Activated naive CD4-positive, alpha-beta T cell treated with anti-CD3 and anti-CD28 coated beads for 36 hours (primary cell): ENCODE measurements at regions of chr7 and their contacts with region 1.

Region 1: GRCh38 chr7:149028346-149029109 is at the start of gene PDIA4:
- DNase-seq: peak; percentile 100
- H3K4me3 Mint-ChIP-seq: peak within 1 kb of the TSS; percentile 95
- H3K27ac Mint-ChIP-seq: peak within 1 kb of the TSS; percentile 89
- H3K4me1 Mint-ChIP-seq: peaks cover 37% of the 10 kb centered on the region
- H3K27me3 Mint-ChIP-seq: no peaks in the 10 kb centered on the region
- total RNA-seq, gene PDIA4: 80.2 to 82.8 TPM

Region 2: GRCh38 chr7:148598351-148598750 is 430.2 kb before region 1 on chr7:
- CTCF ChIA-PET with region 1: no interaction called
- intact Hi-C with region 1: no loop called
- DNase-seq: no peak
- H3K4me3 Mint-ChIP-seq: no peak overlapping the region
- H3K27ac Mint-ChIP-seq: no peak overlapping the region
- H3K4me1 Mint-ChIP-seq: no peaks in the 10 kb centered on the region
- H3K27me3 Mint-ChIP-seq: no peaks in the 10 kb centered on the region

Region 3: DNA sequence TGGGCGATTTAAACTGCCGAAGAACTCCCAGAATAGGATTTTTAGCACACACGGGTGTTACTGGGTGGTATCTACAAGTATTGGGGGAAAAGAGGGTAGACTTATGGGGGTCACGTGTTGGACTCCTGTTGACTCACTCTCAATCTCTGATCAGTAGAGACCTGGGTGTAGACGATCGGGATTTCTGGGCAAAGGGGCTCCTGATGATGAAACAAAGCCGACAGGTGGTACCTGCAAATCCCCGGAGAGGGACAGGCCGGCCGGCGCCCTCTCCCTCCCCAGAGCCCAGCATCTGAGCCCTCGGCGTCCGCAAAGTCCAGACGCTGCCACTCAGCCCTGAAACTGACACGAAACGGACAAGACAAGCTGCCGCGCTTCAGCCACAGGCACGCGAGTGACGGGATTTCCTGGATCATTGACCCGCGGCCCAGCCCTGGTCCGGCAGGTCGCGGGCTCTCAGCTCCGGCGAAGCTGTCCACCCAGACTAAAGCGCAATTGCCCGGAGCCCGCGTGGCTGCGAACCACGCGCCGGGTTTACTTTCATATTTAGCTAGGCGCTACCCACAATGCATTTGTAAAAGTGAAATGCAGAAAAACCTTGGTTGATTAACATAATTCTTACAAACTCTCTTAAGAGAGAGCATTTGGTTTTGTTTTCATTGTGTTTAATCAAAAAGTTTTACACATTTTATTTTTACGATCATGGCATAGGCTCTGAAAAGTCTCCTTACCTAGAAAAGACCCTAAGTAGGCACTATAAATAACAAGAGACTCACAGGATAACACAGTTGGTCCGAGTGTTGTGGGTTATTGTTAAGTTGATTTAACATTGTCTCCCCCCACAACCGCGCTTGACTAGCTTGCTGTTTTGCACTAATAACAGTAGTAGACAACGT is 87.6 kb before region 1 on chr7:
- CTCF ChIA-PET with region 1: no interaction called
- intact Hi-C with region 1: loop called (anchors 1 kb)
- DNase-seq: peak; percentile 68
- H3K4me3 Mint-ChIP-seq: peak overlapping the region; percentile 94
- H3K27ac Mint-ChIP-seq: peak overlapping the region; percentile 98
- H3K4me1 Mint-ChIP-seq: peaks cover 15% of the 10 kb centered on the region
- H3K27me3 Mint-ChIP-seq: no peaks in the 10 kb centered on the region

Region 4: DNA sequence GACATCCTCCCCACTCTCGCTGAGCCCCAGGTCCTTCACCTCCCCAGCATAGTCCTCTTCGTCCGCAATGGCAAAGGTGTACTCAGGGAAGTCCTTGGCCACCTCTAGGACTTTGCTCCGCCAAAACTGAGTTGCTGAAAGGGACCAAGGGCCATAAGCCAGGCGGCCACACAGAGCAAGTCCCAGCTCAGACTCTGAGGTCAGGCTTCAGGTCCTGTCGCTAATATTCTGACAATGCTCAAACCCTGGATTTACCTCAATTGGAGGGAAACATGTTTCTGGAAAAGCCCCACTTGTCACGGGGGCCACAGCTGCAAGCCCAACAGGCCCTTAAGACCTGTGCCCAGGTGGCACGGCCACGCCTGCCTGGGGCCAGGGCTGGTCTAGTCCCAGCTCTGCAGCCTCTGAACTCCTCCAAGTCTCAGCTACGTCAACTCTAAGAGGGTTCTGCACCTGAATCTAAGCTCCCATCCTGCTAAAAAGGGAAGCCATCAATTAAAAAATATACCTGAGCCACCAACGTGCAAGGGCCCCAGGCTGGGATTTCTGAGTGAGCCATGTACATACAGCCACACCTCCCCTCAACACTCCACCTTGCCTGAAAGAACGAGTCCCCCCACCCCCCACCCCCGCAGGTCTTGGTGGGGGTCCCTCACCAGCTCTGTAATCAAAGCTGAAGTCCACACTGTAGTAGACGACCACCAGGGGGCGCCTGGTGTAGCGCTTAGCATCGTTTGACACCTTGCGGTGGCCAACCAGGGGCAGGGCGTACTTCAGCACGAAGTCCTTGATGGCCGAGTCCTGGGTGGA is 23.1 kb before region 1 on chr7:
- CTCF ChIA-PET with region 1: interaction called, 59 read pairs
- intact Hi-C with region 1: loop called (anchors 1 kb)
- DNase-seq: peak; percentile 88
- H3K4me3 Mint-ChIP-seq: no peak overlapping the region
- H3K27ac Mint-ChIP-seq: no peak overlapping the region
- H3K4me1 Mint-ChIP-seq: peaks cover 3% of the 10 kb centered on the region
- H3K27me3 Mint-ChIP-seq: no peaks in the 10 kb centered on the region

Region 5: GRCh38 chr7:149147072-149147751 is 118.7 kb after region 1 on chr7 and contains the start of gene ZNF398:
- CTCF ChIA-PET with region 1: no interaction called
- intact Hi-C with region 1: loop called (anchors 1 kb)
- DNase-seq: peak; percentile 73
- H3K4me3 Mint-ChIP-seq: peak within 1 kb of the TSS; percentile 87
- H3K27ac Mint-ChIP-seq: peak within 1 kb of the TSS; percentile 91
- H3K4me1 Mint-ChIP-seq: peaks cover 33% of the 10 kb centered on the region
- H3K27me3 Mint-ChIP-seq: no peaks in the 10 kb centered on the region
- total RNA-seq, gene ZNF398: 4.3 to 5.0 TPM

Region 6: GRCh38 chr7:149245244-149245643 is 216.7 kb after region 1 on chr7:
- CTCF ChIA-PET with region 1: no interaction called
- intact Hi-C with region 1: loop called (anchors 2 kb)
- DNase-seq: peak; percentile 75
- H3K4me3 Mint-ChIP-seq: no peak overlapping the region
- H3K27ac Mint-ChIP-seq: peak overlapping the region; percentile 91
- H3K4me1 Mint-ChIP-seq: peaks cover 75% of the 10 kb centered on the region
- H3K27me3 Mint-ChIP-seq: no peaks in the 10 kb centered on the region

Region 7: GRCh38 chr7:149284850-149285626 is 256.5 kb after region 1 on chr7:
- CTCF ChIA-PET with region 1: no interaction called
- intact Hi-C with region 1: loop called (anchors 2 kb)
- DNase-seq: peak; percentile 99
- H3K4me3 Mint-ChIP-seq: peak overlapping the region; percentile 79
- H3K27ac Mint-ChIP-seq: no peak overlapping the region
- H3K4me1 Mint-ChIP-seq: peaks cover 36% of the 10 kb centered on the region
- H3K27me3 Mint-ChIP-seq: no peaks in the 10 kb centered on the region

Region 8: DNA sequence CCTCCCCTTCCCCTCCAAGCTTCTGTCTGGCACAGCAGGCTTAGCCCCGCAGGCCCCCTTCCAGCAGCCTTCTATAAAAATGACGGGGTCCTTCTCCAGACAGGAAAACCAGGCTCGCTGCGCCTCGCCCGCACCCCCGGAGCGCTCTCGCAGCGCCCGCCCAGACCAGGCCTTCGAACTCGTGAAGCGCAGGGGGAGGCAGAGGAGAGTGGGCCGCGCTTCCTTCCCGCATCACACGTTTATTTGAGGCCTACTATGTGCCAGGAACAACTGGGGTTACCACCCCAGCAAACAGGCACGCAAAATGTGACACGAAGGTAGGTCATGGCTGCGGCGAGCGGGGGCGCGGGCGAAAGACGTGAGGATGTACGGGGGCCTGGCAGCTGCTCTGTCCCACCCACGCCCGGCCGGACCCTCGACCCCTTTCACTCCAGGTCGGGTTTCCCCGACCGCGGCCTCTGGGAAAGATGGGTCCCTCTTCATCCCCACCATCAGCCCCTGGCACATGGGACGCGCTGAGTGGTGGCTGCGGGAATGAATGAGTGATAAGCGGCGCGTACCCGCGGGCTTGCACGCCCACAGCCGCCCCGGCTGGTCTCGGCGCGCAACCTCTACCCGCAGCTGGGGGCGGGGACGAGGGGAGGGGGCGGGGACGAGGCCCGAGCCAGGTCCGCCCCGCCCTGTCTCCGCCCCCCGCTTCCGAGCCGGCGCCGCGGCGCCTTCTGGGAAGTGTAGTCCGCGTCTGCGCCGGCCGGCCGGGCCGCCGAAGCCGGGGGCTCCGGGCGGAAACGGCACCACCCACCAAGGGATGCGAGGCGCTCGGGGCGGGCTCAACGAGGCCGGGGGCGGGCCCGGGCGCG is 685.8 kb after region 1 on chr7:
- CTCF ChIA-PET with region 1: no interaction called
- intact Hi-C with region 1: loop called (anchors 10 kb)
- DNase-seq: peak; percentile 94
- H3K4me3 Mint-ChIP-seq: peak overlapping the region; percentile 73
- H3K27ac Mint-ChIP-seq: no peak overlapping the region
- H3K4me1 Mint-ChIP-seq: peaks cover 17% of the 10 kb centered on the region
- H3K27me3 Mint-ChIP-seq: no peaks in the 10 kb centered on the region